Sigmoid colon (tissue), 7 donors: ENCODE measurements at regions of chr12 and their contacts with region 1.

Region 1: DNA sequence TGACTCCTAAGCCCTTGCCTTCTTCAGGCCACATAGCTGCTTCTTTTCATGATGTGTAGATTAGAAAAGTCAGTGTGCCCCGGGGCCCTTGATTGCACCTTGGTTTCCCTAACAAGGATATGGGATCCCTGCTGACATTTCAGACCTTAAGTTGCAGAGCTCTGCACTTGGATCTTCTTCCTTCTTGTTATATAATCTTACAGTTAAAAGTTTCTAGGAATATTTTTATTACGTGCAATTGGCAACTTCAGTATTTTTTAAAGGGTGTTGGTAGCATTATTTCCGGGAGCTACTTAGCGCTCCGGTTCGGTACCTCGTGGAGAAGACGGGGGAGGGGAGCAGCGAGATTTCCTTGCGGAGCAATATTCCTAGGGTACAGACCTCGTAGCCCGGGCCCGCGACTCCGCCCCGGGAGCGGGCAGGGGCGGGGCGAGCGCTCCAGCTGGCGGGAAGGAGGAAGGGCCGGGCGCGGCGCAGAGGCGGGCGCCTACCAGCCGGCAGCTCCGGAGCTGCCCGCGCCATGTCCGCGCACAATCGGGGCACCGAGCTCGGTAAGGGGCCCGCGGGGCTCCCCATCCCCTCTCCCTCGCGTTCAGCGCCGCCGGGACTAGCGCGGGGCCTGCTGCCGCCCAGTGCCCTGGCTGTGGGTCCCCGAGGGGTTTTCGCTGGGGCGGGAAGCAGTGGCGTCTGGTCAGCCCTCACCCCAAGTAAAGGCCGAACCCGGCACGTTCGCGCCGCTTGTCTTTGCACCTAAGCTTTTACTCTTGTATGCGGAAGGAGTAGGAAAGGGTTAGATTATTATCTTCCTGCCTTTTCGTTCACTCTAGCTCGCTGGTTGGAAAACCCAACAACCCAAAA is at the start of gene DERA:
- DNase-seq: peak; percentile 89
- H3K4me3 ChIP-seq: peak within 1 kb of the TSS; percentile 75 to 81 (median 80)
- H3K27ac ChIP-seq: peak within 1 kb of the TSS; percentile 92 to 98 (median 96)
- H3K4me1 ChIP-seq: peaks cover 0 to 40% (median 13%) of the 10 kb centered on the region in 4 donors
- H3K27me3 ChIP-seq: no peaks in the 10 kb centered on the region
- CTCF ChIP-seq: peak in 1 of 4 experiments; percentile 16
- EP300 ChIP-seq: no peak
- POLR2A ChIP-seq: peak; percentile 74 to 76
- total RNA-seq, gene DERA: 26.6 to 54.2 (median 43.8) TPM

Region 2: GRCh38 chr12:15772405-15773018 is 138.6 kb before region 1 on chr12:
- intact Hi-C with region 1: no loop called
- DNase-seq: no peak
- H3K4me3 ChIP-seq: no peak overlapping the region
- H3K27ac ChIP-seq: no peak overlapping the region
- H3K4me1 ChIP-seq: peaks cover 0 to 19% (median 14%) of the 10 kb centered on the region in 4 donors
- H3K27me3 ChIP-seq: no peaks in the 10 kb centered on the region
- CTCF ChIP-seq: no peak
- EP300 ChIP-seq: no peak
- POLR2A ChIP-seq: no peak

Region 3: DNA sequence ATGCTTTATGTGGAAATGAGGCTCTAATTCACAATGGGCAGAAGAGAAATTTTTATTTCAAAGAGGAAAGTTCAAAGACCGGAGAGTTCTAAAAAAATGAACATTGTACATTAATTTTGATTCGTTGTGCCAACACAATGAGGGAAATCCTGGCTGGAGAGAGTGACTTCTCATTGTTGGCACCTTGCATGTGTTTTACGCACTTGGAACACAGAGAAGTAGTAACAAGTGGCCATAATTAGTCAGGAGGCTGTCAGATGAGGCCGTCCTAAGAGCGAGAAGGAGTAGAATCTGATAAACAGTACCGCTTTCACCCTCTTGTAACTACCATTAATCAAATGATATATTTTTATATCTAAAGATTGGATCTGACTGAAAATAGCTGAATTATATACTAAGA is 688.0 kb after region 1 on chr12:
- intact Hi-C with region 1: loop called (anchors 10 kb)
- DNase-seq: peak; percentile 82
- H3K4me3 ChIP-seq: peak overlapping the region in 3 of 4 donors; percentile 11 to 37 (median 33)
- H3K27ac ChIP-seq: peak overlapping the region; percentile 84 to 91 (median 84)
- H3K4me1 ChIP-seq: peaks cover 0 to 37% (median 15%) of the 10 kb centered on the region in 4 donors
- H3K27me3 ChIP-seq: no peaks in the 10 kb centered on the region
- CTCF ChIP-seq: no peak
- EP300 ChIP-seq: peak in 1 of 4 donors; percentile 53
- POLR2A ChIP-seq: no peak